ENCODE measurements at regions of chr12 and their contacts with region 1.

Region 1: GRCh38 chr12:81843599-81843998 is 84.4 kb upstream of the PPFIA2 start:
- DNase-seq: no peak
- ATAC-seq: no peak
- H3K4me3 ChIP-seq: no peak overlapping the region
- H3K27ac ChIP-seq: no peak overlapping the region
- H3K4me1 ChIP-seq: no peaks in the 10 kb centered on the region
- H3K27me3 ChIP-seq: no peaks in the 10 kb centered on the region
- CTCF ChIP-seq: no peak
- POLR2A ChIP-seq: no peak

Region 2: GRCh38 chr12:81268664-81268926 is 575.0 kb before region 1 on chr12:
- in situ Hi-C with region 1: no loop called
- intact Hi-C with region 1: loop called (anchors 5 kb)
- DNase-seq: no peak
- ATAC-seq: no peak
- H3K4me3 ChIP-seq: no peak overlapping the region
- H3K27ac ChIP-seq: no peak overlapping the region
- H3K4me1 ChIP-seq: no peaks in the 10 kb centered on the region
- H3K27me3 ChIP-seq: no peaks in the 10 kb centered on the region
- CTCF ChIP-seq: no peak
- POLR2A ChIP-seq: no peak

Region 3: GRCh38 chr12:81610955-81611889 is 232.4 kb before region 1 on chr12:
- in situ Hi-C with region 1: no loop called
- intact Hi-C with region 1: no loop called
- DNase-seq: no peak
- ATAC-seq: no peak
- H3K4me3 ChIP-seq: no peak overlapping the region
- H3K27ac ChIP-seq: no peak overlapping the region
- H3K4me1 ChIP-seq: no peaks in the 10 kb centered on the region
- H3K27me3 ChIP-seq: no peaks in the 10 kb centered on the region
- CTCF ChIP-seq: no peak
- POLR2A ChIP-seq: no peak